GM13977 (cell line): ENCODE measurements at regions of chr1 and their contacts with region 1.

Region 1: GRCh38 chr1:183783767-183784637 is 20.9 kb upstream of the RGL1 start:
- DNase-seq: no peak
- CTCF ChIP-seq: no peak

Region 2: GRCh38 chr1:183689770-183690204 is 94.2 kb before region 1 on chr1:
- in situ Hi-C with region 1: loop called (anchors 10 kb)
- DNase-seq: peak; percentile 27
- CTCF ChIP-seq: no peak